ENCODE measurements at regions of chr2 and their contacts with region 1.

Region 1: DNA sequence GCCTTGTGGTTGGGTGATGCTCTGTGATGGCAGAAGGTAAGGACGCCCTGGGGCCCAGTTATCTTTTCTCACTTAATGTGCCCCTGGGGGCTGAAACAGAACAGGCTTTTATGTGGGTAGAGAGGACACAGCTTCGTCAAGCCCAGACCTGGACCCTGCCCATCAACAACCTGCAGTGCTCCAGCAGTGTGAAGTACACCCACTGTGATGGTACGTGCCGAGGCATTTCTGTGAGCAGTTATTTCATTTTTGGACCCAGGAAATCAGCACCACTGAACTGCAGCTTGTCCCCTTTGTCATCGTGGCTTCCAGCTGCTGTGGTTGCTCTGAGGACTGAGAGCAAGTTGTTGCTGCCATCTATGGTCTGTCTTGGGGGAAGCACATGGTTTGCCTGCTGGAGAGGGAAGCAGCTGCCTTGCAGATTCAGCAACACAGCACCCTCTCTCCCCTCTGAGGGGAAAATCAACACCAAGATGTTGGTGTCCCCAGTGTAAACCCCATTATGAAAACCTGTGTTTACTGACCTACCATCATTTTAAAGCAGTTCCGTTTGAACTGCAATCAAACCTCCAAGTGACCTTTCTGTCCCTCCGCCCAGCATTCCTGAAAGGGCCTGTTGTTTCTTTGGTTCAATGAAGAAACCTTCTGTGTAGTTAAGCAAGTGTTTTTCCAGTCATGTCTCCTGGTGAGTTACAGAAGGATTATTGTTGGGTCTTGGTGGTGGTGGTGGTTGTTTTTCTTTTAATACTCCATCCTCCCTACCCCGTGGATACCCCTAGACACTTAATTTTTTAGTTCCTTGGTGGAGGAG is 158.2 kb downstream of the MGAT5 start:
- DNase-seq: peak; percentile 62
- H3K4me3 Mint-ChIP-seq: no peak overlapping the region
- H3K27ac Mint-ChIP-seq: no peak overlapping the region
- H3K4me1 Mint-ChIP-seq: peaks cover 28% of the 10 kb centered on the region
- H3K27me3 Mint-ChIP-seq: no peaks in the 10 kb centered on the region

Region 2: DNA sequence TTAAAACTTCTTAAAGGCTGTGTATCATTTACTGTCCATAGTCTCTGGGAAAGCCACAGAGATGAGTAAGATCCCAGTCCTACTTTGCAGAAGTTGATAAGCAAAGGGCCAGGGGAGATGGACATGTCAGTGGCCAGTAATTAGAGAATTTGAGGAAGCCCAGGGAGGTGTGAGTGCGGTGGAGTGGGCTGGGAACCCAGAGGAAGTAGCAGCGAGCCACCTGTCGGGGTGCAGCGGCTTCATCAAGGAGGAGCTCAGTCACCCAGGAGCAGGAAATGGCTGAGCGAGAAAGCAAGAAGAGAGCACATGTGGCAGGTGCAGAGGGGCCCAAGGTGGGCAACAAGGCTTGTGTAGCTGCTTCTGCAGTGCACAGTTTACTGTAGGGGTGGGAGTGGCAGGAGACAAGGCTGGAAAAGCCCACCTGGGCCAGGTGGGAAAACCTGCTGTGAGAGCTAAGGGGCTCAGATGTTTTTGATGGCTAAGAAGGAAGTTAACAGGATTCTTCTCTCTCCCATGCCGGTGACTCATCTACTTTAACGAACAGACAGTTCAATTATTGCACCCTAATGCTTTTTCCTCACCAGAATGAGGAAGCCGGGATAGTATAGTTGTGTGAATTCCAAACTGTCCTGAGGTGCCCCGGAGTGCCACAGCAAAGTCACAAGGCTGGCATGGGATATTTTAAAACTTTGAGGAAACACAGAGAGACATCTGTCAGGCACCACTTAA is 192.9 kb before region 1 on chr2:
- intact Hi-C with region 1: loop called (anchors 1 kb)
- DNase-seq: peak; percentile 11
- H3K4me3 Mint-ChIP-seq: no peak overlapping the region
- H3K27ac Mint-ChIP-seq: peak overlapping the region; percentile 75
- H3K4me1 Mint-ChIP-seq: peaks cover 40% of the 10 kb centered on the region
- H3K27me3 Mint-ChIP-seq: peaks cover 9% of the 10 kb centered on the region

Region 3: DNA sequence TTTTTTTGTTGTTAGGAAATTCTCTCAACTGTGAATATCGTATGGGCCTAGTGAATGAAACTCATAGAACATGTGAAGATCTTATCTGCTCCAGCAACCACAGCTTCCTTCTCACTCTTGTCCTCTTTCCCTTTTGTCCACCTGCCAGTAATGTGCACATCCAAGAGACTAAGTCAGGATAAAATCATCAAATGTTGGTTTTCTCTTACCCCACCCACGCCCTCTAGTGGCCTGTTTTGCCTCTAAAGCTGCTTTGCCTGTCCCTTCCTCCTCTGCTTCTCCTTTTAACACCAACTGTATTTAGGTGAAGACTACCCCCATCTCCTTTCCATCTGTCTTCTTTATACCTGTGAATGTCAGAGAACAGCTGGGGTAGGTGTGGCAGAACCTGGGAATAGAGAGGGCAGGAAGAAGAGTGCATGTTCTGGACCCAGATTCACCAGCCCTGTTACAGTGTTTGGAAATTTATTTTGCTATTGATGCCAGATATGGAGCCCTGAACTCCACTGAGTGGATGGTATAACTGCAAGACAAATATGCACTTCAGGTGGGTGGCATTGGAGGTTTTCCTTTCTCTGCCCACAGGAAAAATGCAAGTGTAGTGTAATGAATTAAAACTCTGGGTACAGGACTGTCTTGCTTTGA is 166.6 kb before region 1 on chr2:
- intact Hi-C with region 1: loop called (anchors 1 kb)
- DNase-seq: peak; percentile 54
- H3K4me3 Mint-ChIP-seq: no peak overlapping the region
- H3K27ac Mint-ChIP-seq: no peak overlapping the region
- H3K4me1 Mint-ChIP-seq: peaks cover 51% of the 10 kb centered on the region
- H3K27me3 Mint-ChIP-seq: peaks cover 12% of the 10 kb centered on the region

Region 4: DNA sequence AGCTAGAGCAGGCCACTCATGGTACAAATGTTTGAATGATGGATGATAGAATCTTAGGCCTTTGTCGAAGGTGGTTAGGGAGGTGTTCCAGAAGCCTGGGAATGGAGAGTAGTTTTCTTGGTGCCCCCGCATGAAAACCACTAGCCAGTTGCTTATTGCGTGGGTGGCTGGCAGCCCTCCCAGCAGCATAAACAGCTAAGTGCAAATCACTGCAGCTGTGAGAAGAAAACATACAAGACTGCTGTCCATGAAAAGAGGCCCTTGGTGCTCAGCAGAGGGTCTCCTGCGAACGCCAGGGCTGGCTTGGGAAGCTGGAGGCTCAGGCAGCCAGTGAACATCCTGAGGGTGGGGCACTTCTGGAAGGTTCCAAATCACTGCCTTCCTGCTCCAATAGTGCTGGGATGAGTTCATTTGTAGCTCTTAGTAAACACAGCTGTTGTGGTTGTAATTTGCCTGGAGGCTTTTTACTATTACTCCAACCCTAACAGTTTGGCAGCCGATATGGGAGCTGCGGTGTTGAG is 39.4 kb before region 1 on chr2:
- intact Hi-C with region 1: no loop called
- DNase-seq: no peak
- H3K4me3 Mint-ChIP-seq: no peak overlapping the region
- H3K27ac Mint-ChIP-seq: no peak overlapping the region
- H3K4me1 Mint-ChIP-seq: peaks cover 15% of the 10 kb centered on the region
- H3K27me3 Mint-ChIP-seq: peaks cover 2% of the 10 kb centered on the region